ENCODE measurements at regions of chr10 and their contacts with region 1.

Region 1: GRCh38 chr10:70575874-70576802 is 26.4 kb downstream of the PRF1 start:
- DNase-seq: peak in 3 of 9 experiments; percentile 48 to 79 (median 71)
- ATAC-seq: peak; percentile 6
- H3K4me3 ChIP-seq: peak overlapping the region in 1 of 2 experiments; percentile 19
- H3K4me3 Mint-ChIP-seq: peak overlapping the region; percentile 37
- H3K27ac ChIP-seq: peak overlapping the region in 1 of 2 experiments; percentile 54
- H3K27ac Mint-ChIP-seq: peak overlapping the region; percentile 84
- H3K4me1 ChIP-seq: peaks cover 45% of the 10 kb centered on the region
- H3K4me1 Mint-ChIP-seq: peaks cover 46% of the 10 kb centered on the region
- H3K27me3 ChIP-seq: no peaks in the 10 kb centered on the region
- H3K27me3 Mint-ChIP-seq: no peaks in the 10 kb centered on the region
- CTCF ChIP-seq: no peak

Region 2: DNA sequence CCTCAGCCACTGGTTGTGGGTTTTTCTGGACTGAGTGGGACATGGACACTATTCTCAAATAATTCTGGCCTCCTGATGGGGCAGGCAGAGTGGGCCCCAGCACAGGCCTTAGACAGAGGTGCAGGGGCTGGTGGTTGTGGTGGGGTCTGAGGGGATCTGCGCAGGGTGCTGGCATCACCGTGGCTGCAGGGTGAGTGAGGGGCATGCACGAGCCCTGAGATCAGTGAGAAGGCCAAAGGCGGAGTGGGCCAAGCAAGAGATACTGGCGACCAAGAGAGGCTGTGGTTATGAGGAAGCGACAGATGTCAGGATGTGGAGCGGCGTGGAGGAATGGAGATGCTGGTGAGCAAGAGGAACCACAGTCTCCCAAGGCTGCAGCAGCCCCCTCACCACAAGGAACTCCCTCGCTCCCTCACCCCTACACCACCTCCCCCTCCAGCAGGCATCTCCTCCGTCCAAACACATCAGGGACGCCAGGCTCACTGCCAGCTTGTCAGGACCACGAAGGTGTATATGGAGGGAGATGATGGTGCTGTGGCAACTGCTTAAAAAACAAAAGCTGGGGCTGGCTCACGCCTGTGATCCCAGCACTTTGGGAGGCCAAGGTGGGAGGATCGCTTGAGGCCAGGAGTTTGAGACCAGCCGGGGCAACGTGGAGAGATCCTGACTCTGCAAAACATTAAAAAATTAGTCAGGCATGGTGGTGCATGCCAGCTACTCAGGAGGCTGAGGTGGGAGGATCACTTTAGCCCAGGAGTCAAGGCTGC is 16.8 kb after region 1 on chr10:
- CTCF ChIA-PET with region 1: interaction called, 3 read pairs
- POLR2A ChIA-PET with region 1: interaction called, 5 read pairs
- intact Hi-C with region 1: loop called in 1 of 2 experiments (anchors 1 kb)
- DNase-seq: peak in 1 of 9 experiments; percentile 46
- ATAC-seq: no peak
- H3K4me3 ChIP-seq: no peak overlapping the region
- H3K4me3 Mint-ChIP-seq: no peak overlapping the region
- H3K27ac ChIP-seq: no peak overlapping the region
- H3K27ac Mint-ChIP-seq: no peak overlapping the region
- H3K4me1 ChIP-seq: peaks cover 23% of the 10 kb centered on the region
- H3K4me1 Mint-ChIP-seq: peaks cover 55% of the 10 kb centered on the region
- H3K27me3 ChIP-seq: no peaks in the 10 kb centered on the region
- H3K27me3 Mint-ChIP-seq: no peaks in the 10 kb centered on the region
- CTCF ChIP-seq: no peak

Region 3: GRCh38 chr10:70602665-70603448 is 26.7 kb after region 1 on chr10 and contains the start of gene PRF1:
- CTCF ChIA-PET with region 1: interaction called, 4 read pairs
- POLR2A ChIA-PET with region 1: interaction called, 5 read pairs
- intact Hi-C with region 1: loop called (anchors 1 kb)
- DNase-seq: peak; percentile 66 to 94 (median 90)
- ATAC-seq: peak; percentile 90
- H3K4me3 ChIP-seq: peak within 1 kb of the TSS; percentile 71 to 86
- H3K4me3 Mint-ChIP-seq: peak within 1 kb of the TSS; percentile 100
- H3K27ac ChIP-seq: peak within 1 kb of the TSS; percentile 61 to 73
- H3K27ac Mint-ChIP-seq: peak within 1 kb of the TSS; percentile 99
- H3K4me1 ChIP-seq: peaks cover 57% of the 10 kb centered on the region
- H3K4me1 Mint-ChIP-seq: peaks cover 71% of the 10 kb centered on the region
- H3K27me3 ChIP-seq: no peaks in the 10 kb centered on the region
- H3K27me3 Mint-ChIP-seq: no peaks in the 10 kb centered on the region
- CTCF ChIP-seq: no peak
- total RNA-seq, gene PRF1: 56.4 to 57.3 TPM

Region 4: GRCh38 chr10:70619271-70620019 is 43.3 kb after region 1 on chr10:
- CTCF ChIA-PET with region 1: interaction called, 4 read pairs
- POLR2A ChIA-PET with region 1: no interaction called
- intact Hi-C with region 1: loop called in 1 of 2 experiments (anchors 5 kb)
- DNase-seq: peak in 2 of 9 experiments; percentile 30 to 44
- ATAC-seq: no peak
- H3K4me3 ChIP-seq: no peak overlapping the region
- H3K4me3 Mint-ChIP-seq: no peak overlapping the region
- H3K27ac ChIP-seq: no peak overlapping the region
- H3K27ac Mint-ChIP-seq: peak overlapping the region; percentile 25
- H3K4me1 ChIP-seq: peaks cover 21% of the 10 kb centered on the region
- H3K4me1 Mint-ChIP-seq: peaks cover 41% of the 10 kb centered on the region
- H3K27me3 ChIP-seq: no peaks in the 10 kb centered on the region
- H3K27me3 Mint-ChIP-seq: no peaks in the 10 kb centered on the region
- CTCF ChIP-seq: no peak